Adrenal gland (tissue), 19 donors: ENCODE measurements at regions of chr17 and their contacts with region 1.

Region 1: GRCh38 chr17:2828397-2829038 is 32.3 kb downstream of the RAP1GAP2 start:
- DNase-seq: peak; percentile 64 to 82 (median 74)
- H3K4me3 ChIP-seq: no peak overlapping the region
- H3K27ac ChIP-seq: no peak overlapping the region
- H3K4me1 ChIP-seq: no peaks in the 10 kb centered on the region
- H3K27me3 ChIP-seq: no peaks in the 10 kb centered on the region
- CTCF ChIP-seq: peak; percentile 81 to 91 (median 90)
- POLR2A ChIP-seq: no peak

Region 2: DNA sequence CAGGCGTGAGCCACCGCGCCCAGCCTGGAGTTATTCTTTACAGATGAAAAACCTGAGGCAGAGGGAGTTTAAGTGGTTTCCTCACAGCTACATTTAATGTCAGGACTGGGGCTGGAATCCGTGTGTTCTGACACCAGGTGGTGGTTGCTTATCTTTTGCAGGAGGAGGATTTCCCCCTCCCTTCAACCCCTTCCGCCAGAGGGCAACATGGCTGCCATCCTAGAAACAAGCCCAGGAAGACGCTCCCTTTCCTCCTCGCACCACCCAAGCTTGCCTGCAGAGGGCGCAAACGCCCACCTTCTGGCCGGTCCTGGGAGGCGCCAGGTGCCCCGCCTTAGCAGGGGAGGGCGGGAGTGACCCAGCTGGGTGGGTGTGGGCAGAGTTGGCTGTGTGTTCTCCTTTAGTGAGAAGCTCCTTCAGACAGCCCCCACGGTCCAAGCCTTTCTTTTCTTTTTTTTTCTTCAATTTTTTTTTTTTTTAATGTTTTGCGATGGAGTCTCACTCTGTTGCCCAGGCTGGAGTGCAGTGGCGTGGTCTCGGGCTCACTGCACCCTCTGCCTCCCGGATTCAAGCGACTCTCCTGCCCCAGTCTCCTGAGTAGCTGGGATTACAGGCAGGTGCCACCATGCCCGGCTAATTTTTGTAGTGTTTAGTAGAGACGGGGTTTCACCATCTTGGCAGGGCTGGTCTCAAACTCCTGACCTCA is 42.2 kb before region 1 on chr17:
- intact Hi-C with region 1: loop called in 1 of 2 experiments (anchors 5 kb)
- DNase-seq: peak; percentile 85 to 95 (median 88)
- H3K4me3 ChIP-seq: no peak overlapping the region
- H3K27ac ChIP-seq: no peak overlapping the region
- H3K4me1 ChIP-seq: no peaks in the 10 kb centered on the region
- H3K27me3 ChIP-seq: no peaks in the 10 kb centered on the region
- CTCF ChIP-seq: peak; percentile 73 to 89 (median 84)
- POLR2A ChIP-seq: no peak